Right lobe of liver (tissue), 6 donors: ENCODE measurements at regions of chr2 and their contacts with region 1.

Region 1: GRCh38 chr2:36339607-36340218 is 15.9 kb upstream of the CRIM1 start:
- DNase-seq: no peak
- ATAC-seq: no peak
- H3K4me3 ChIP-seq: no peak overlapping the region
- H3K27ac ChIP-seq: no peak overlapping the region
- H3K4me1 ChIP-seq: no peaks in the 10 kb centered on the region
- H3K27me3 ChIP-seq: no peaks in the 10 kb centered on the region
- CTCF ChIP-seq: no peak
- POLR2A ChIP-seq: no peak

Region 2: GRCh38 chr2:36290306-36290705 is 49.4 kb before region 1 on chr2:
- intact Hi-C with region 1: no loop called
- DNase-seq: no peak
- ATAC-seq: no peak
- H3K4me3 ChIP-seq: no peak overlapping the region
- H3K27ac ChIP-seq: no peak overlapping the region
- H3K4me1 ChIP-seq: no peaks in the 10 kb centered on the region
- H3K27me3 ChIP-seq: no peaks in the 10 kb centered on the region
- CTCF ChIP-seq: no peak
- POLR2A ChIP-seq: no peak

Region 3: GRCh38 chr2:36663851-36664695 is 324.4 kb after region 1 on chr2:
- intact Hi-C with region 1: loop called in 1 of 2 experiments (anchors 10 kb)
- DNase-seq: no peak
- ATAC-seq: peak; percentile 88 to 94 (median 90)
- H3K4me3 ChIP-seq: no peak overlapping the region
- H3K27ac ChIP-seq: no peak overlapping the region
- H3K4me1 ChIP-seq: no peaks in the 10 kb centered on the region
- H3K27me3 ChIP-seq: peaks cover 0 to 4% of the 10 kb centered on the region in 2 donors
- CTCF ChIP-seq: peak; percentile 75 to 78 (median 77)
- POLR2A ChIP-seq: no peak